WTC11 (cell line): ENCODE measurements at regions of chr11 and their contacts with region 1.

Region 1: GRCh38 chr11:125123947-125124617 is 12.7 kb upstream of the TMEM218 start:
- DNase-seq: peak; percentile 58
- ATAC-seq: peak; percentile 99
- H3K4me3 Mint-ChIP-seq: no peak overlapping the region
- H3K27ac Mint-ChIP-seq: no peak overlapping the region
- H3K4me1 Mint-ChIP-seq: no peaks in the 10 kb centered on the region
- H3K27me3 Mint-ChIP-seq: peaks cover 77% of the 10 kb centered on the region
- CTCF ChIP-seq: 0 out of 2 replicates have a peak, but pooled peaks have one; percentile 15

Region 2: DNA sequence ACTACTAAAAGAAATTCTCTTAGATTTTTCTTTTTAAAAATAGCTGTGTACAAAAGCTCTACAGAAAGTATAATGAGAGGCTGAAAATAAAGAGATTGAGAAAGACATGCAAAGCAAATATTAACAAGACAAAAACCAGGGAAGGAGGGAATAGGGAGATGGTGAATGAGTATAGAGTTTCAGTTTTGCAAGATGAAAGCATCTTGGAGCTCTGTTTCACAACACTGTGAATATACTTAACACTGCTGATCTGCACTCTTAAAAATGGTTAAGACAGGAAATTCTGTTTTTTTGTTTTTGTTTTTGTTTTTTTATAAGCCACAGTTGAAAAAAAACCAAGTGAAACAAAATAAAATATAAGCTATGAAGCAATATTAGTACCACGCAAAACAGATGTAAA is 18.2 kb before region 1 on chr11:
- CTCF ChIA-PET with region 1: interaction called, 44 read pairs
- POLR2A ChIA-PET with region 1: no interaction called
- DNase-seq: no peak
- ATAC-seq: no peak
- H3K4me3 Mint-ChIP-seq: no peak overlapping the region
- H3K27ac Mint-ChIP-seq: no peak overlapping the region; the same call in 1 of the 2 replicates
- H3K4me1 Mint-ChIP-seq: peaks cover 21% of the 10 kb centered on the region
- H3K27me3 Mint-ChIP-seq: peaks cover 4% of the 10 kb centered on the region; the same call in 1 of the 2 replicates
- CTCF ChIP-seq: no peak

Region 3: DNA sequence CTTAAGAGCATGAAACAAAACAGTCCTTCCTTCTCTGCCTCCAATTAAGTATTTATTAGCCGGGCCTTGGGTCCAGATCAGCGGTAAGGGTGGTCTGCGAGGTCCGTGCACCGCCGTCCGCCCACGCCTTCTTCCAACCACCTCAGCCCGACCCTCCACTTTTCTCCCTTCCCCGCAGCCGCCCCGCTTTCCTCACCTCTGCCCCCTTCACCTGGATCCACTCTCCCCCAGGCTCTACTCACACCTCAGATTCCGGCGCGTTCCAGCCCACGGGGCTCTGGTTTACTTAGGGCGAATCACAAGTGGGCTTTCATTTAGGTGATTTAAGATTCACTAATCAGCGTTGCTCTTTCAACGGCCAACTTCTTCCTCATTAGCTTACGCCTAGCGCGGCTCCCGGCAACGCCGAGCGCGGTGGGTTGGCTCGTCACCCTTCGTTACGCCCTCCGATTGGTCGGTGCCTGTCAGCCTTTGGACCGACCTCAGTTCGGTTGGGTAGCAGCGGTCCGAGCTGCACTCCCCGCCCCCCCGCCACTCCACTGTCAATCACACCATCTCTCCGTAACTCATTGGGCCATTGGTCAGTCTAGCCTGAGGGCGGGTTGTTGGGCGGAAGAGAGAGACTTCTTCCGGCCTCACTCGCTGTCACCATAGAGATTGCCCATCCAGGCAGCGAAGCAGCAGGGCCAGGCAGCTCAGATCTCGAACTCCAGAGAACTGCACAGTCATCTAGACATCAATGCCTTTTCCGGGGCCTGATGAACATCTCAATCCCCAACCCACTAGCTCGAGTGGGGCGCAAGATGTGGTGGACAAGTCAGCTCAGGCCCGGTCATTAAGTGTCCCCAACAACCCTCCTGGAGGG is 12.5 kb before region 1 on chr11 and contains the start of gene TMEM218:
- CTCF ChIA-PET with region 1: interaction called, 44 read pairs
- POLR2A ChIA-PET with region 1: interaction called, 3 read pairs
- DNase-seq: peak; percentile 98
- ATAC-seq: peak; percentile 99
- H3K4me3 Mint-ChIP-seq: peak within 1 kb of the TSS; percentile 98
- H3K27ac Mint-ChIP-seq: peak within 1 kb of the TSS; percentile 98
- H3K4me1 Mint-ChIP-seq: peaks cover 14% of the 10 kb centered on the region
- H3K27me3 Mint-ChIP-seq: no peaks in the 10 kb centered on the region; the same call in 1 of the 2 replicates
- CTCF ChIP-seq: no peak
- total RNA-seq, gene TMEM218: 10.3 to 12.4 TPM (median 11.0 TPM) in 3 replicates

Region 4: GRCh38 chr11:125371431-125371935 is 247.4 kb after region 1 on chr11:
- CTCF ChIA-PET with region 1: interaction called, 10 read pairs
- POLR2A ChIA-PET with region 1: no interaction called
- DNase-seq: peak; percentile 86
- ATAC-seq: peak; percentile 88
- H3K4me3 Mint-ChIP-seq: peak overlapping the region; percentile 64
- H3K27ac Mint-ChIP-seq: peak overlapping the region; percentile 97
- H3K4me1 Mint-ChIP-seq: peaks cover 58% of the 10 kb centered on the region
- H3K27me3 Mint-ChIP-seq: peaks cover 5% of the 10 kb centered on the region
- CTCF ChIP-seq: no peak